Activated CD8-positive, alpha-beta memory T cell treated with anti-CD3 and anti-CD28 coated beads, Interleukin-2, amount 10 ng/mL, durations not matched to agents 7 days and 5 days (primary cell): ENCODE measurements at regions of chr15 and their contacts with region 1.

Region 1: GRCh38 chr15:89171136-89172072 is 50.0 kb downstream of the RLBP1 start:
- DNase-seq: peak; percentile 47
- ATAC-seq: no peak
- H3K4me3 Mint-ChIP-seq: no peak overlapping the region
- H3K27ac Mint-ChIP-seq: no peak overlapping the region
- H3K4me1 Mint-ChIP-seq: peaks cover 18% of the 10 kb centered on the region
- H3K27me3 Mint-ChIP-seq: no peaks in the 10 kb centered on the region

Region 2: GRCh38 chr15:89068325-89068784 is 103.0 kb before region 1 on chr15:
- CTCF ChIA-PET with region 1: interaction called, 11 read pairs
- DNase-seq: peak; percentile 88
- ATAC-seq: peak; percentile 92
- H3K4me3 Mint-ChIP-seq: peak overlapping the region; percentile 2
- H3K27ac Mint-ChIP-seq: peak overlapping the region; percentile 66
- H3K4me1 Mint-ChIP-seq: peaks cover 22% of the 10 kb centered on the region
- H3K27me3 Mint-ChIP-seq: peaks cover 3% of the 10 kb centered on the region

Region 3: GRCh38 chr15:89087830-89088604 is 83.4 kb before region 1 on chr15 and contains the start of gene ABHD2:
- CTCF ChIA-PET with region 1: interaction called, 10 read pairs
- DNase-seq: peak; percentile 99
- ATAC-seq: peak; percentile 99
- H3K4me3 Mint-ChIP-seq: no peak within 1 kb of the TSS
- H3K27ac Mint-ChIP-seq: no peak within 1 kb of the TSS
- H3K4me1 Mint-ChIP-seq: peaks cover 33% of the 10 kb centered on the region
- H3K27me3 Mint-ChIP-seq: no peaks in the 10 kb centered on the region
- total RNA-seq, gene ABHD2: 53.3 to 58.1 TPM

Region 4: DNA sequence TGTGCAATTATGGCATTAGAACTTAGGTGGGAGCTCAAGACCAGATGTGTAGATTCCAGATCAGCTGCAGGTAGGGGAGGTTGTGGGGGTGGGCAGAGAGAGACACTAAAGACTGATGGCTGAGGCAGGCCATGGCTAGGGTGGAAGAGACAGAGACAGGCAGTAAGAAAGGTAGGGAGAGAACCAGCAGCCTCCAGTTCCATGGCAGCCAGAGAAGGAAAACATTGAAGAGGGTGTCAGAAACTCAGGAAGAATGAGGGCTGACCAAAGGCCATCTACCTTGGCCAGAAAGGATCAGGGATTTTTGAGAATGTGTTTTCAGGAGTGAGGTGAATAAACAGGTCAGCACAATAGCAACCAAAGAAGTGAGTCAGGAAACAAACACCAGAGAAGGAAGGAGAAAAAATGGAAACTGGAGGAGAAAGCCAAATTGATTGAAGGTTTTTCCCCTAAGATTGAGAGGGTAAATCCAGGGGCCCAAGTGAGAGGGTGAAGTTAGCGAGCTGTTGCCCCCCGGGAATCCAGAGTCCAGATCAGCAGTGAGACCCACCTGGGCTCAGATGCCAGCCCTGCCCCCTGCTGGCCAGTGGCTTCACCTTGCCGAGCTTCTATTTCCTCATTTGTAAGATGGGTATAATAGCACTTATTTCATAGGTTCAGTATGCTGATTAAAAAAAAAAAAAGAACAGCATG is 42.1 kb before region 1 on chr15:
- CTCF ChIA-PET with region 1: interaction called, 23 read pairs
- DNase-seq: peak; percentile 61
- ATAC-seq: no peak
- H3K4me3 Mint-ChIP-seq: no peak overlapping the region
- H3K27ac Mint-ChIP-seq: no peak overlapping the region
- H3K4me1 Mint-ChIP-seq: peaks cover 40% of the 10 kb centered on the region
- H3K27me3 Mint-ChIP-seq: no peaks in the 10 kb centered on the region

Region 5: DNA sequence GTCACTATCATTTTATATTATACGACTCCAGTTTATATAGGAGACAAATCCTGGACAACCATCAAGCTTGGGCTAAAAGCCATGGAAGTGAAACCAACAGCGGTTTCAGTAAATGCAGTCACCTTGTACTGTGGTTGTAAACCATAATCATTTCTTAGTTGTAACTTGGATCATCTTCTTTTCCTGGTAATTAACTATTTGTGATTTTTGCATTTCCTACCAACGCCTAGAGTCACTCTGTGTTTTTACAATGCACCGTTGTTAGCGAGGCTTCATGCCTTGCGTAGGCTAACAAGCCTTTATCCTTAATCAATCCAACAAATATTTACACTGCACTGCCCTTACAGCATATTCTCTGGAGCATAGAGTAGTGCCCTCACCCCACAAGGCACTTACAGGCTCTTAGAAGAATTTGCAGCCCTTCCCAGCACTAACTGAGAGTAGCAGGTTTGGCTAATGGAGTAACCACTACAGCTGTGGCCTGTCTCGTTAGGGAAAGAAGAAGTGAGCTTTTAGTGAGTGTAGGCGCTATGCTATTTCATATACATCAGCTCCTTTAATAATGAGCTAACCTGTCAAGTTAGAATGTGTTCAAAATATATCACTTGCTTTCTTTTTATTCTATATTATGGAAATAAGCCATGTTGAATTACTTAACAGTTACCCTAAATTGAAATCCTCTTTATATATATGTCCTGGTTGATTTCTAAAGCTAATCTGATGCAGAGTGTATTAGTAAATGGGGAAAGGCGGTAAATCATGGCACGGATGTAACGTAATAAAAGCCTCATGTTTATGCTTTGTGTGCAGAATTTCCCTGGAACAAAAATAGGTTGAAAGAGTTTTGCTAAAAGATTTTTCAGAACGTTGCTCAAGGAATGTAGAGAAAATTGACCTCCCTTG is 20.4 kb before region 1 on chr15:
- CTCF ChIA-PET with region 1: interaction called, 10 read pairs
- DNase-seq: no peak
- ATAC-seq: no peak
- H3K4me3 Mint-ChIP-seq: no peak overlapping the region
- H3K27ac Mint-ChIP-seq: no peak overlapping the region
- H3K4me1 Mint-ChIP-seq: peaks cover 9% of the 10 kb centered on the region
- H3K27me3 Mint-ChIP-seq: no peaks in the 10 kb centered on the region

Region 6: GRCh38 chr15:89157918-89158564 is 13.4 kb before region 1 on chr15:
- CTCF ChIA-PET with region 1: interaction called, 13 read pairs
- DNase-seq: no peak
- ATAC-seq: no peak
- H3K4me3 Mint-ChIP-seq: no peak overlapping the region
- H3K27ac Mint-ChIP-seq: no peak overlapping the region
- H3K4me1 Mint-ChIP-seq: peaks cover 4% of the 10 kb centered on the region
- H3K27me3 Mint-ChIP-seq: no peaks in the 10 kb centered on the region

Region 7: DNA sequence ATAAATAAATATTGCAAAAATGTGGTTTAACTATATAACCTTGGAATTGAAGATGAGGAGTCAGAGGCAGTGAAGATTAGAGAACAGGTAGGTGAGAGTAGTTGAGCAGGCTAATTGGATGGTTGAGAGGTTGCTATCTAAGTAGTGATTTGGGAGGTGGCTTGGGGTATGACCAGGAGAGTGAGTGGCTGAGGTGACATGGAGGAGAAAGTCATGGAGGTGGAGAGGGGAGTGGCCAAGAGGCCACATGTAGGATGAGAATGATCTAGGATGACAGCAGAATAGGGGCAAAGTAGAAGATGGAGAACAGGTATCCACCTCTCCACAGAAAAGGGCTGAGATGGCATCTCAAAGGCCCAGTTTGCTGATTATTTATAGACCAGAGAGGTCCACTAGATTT is 60.4 kb after region 1 on chr15:
- CTCF ChIA-PET with region 1: no interaction called
- DNase-seq: no peak
- ATAC-seq: no peak
- H3K4me3 Mint-ChIP-seq: no peak overlapping the region
- H3K27ac Mint-ChIP-seq: no peak overlapping the region
- H3K4me1 Mint-ChIP-seq: peaks cover 10% of the 10 kb centered on the region
- H3K27me3 Mint-ChIP-seq: peaks cover 43% of the 10 kb centered on the region